ENCODE measurements at regions of chr3 and their contacts with region 1.

Region 1: GRCh38 chr3:100073899-100074307 is 40.4 kb downstream of the FILIP1L start:
- DNase-seq: peak in 2 of 9 donors; percentile 5 to 32
- ATAC-seq: no peak
- H3K4me3 ChIP-seq: peak overlapping the region; percentile 8
- H3K4me3 Mint-ChIP-seq: peak overlapping the region; percentile 54 to 82 (median 76)
- H3K27ac ChIP-seq: no peak overlapping the region
- H3K27ac Mint-ChIP-seq: peak overlapping the region in 4 of 9 donors; percentile 10 to 92 (median 38)
- H3K4me1 ChIP-seq: peaks cover 16 to 31% of the 10 kb centered on the region in 2 donors
- H3K4me1 Mint-ChIP-seq: peaks cover 32 to 68% (median 57%) of the 10 kb centered on the region in 7 donors
- H3K27me3 ChIP-seq: no peaks in the 10 kb centered on the region
- H3K27me3 Mint-ChIP-seq: no peaks in the 10 kb centered on the region

Region 2: GRCh38 chr3:99714146-99714545 is 359.8 kb before region 1 on chr3:
- CTCF ChIA-PET with region 1: no interaction called
- POLR2A ChIA-PET with region 1: no interaction called
- intact Hi-C with region 1: no loop called
- DNase-seq: no peak
- ATAC-seq: no peak
- H3K4me3 ChIP-seq: no peak overlapping the region
- H3K4me3 Mint-ChIP-seq: no peak overlapping the region
- H3K27ac ChIP-seq: no peak overlapping the region
- H3K27ac Mint-ChIP-seq: no peak overlapping the region
- H3K4me1 ChIP-seq: no peaks in the 10 kb centered on the region
- H3K4me1 Mint-ChIP-seq: no peaks in the 10 kb centered on the region
- H3K27me3 ChIP-seq: no peaks in the 10 kb centered on the region
- H3K27me3 Mint-ChIP-seq: peaks cover 5 to 10% (median 10%) of the 10 kb centered on the region in 5 donors

Region 3: GRCh38 chr3:99866261-99866761 is 207.6 kb before region 1 on chr3:
- CTCF ChIA-PET with region 1: no interaction called
- POLR2A ChIA-PET with region 1: no interaction called
- intact Hi-C with region 1: loop called in 1 of 2 experiments (anchors 2 kb)
- DNase-seq: peak in 1 of 9 donors; percentile 28
- ATAC-seq: peak; percentile 42
- H3K4me3 ChIP-seq: no peak overlapping the region
- H3K4me3 Mint-ChIP-seq: peak overlapping the region in 2 of 10 donors; percentile 19 to 79
- H3K27ac ChIP-seq: no peak overlapping the region
- H3K27ac Mint-ChIP-seq: peak overlapping the region in 2 of 9 donors; percentile 70 to 89
- H3K4me1 ChIP-seq: peaks cover 0 to 8% of the 10 kb centered on the region in 2 donors
- H3K4me1 Mint-ChIP-seq: peaks cover 17 to 75% (median 28%) of the 10 kb centered on the region in 7 donors
- H3K27me3 ChIP-seq: no peaks in the 10 kb centered on the region
- H3K27me3 Mint-ChIP-seq: no peaks in the 10 kb centered on the region

Region 4: DNA sequence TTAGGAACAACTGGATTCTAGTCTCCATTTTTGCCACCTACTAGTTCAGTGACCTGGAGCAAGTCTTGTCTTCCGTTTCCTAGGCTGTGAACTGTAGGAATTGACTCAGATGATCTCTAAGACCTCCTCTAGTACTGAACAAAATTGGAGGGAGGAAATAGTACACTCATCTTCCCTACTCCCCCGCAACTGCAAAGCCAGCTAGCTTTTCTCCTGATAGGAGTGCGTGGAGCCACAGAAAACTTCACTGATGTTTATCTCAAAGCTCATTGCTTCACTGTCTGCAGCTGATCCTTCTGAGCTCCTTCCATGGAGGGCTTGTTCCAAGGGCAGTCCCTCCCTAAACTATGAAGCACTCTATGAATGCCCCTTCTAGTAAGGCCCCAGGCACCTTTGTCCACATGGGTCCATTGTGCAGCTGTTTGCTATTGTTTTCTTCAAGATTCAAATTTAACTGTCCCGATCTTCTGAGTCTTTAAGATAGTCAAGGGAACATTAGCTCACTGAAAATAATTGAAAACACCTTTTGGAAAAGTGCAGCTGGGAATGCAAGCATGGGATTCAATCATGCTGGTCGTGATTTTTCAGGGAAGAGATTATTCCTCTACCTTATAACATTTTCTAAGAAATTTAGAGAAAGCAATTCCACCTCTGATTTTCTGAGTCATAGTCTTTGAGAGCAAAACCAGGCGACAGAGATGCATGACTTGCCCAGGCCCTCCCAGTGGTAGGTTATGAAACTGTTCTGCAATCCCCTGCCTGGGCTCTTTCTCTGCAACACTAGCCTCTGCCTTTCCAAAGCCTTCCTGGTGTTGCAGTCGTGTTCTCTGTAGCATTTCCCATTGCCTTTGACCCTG is 16.1 kb after region 1 on chr3:
- CTCF ChIA-PET with region 1: interaction called, 3 read pairs
- POLR2A ChIA-PET with region 1: no interaction called
- intact Hi-C with region 1: loop called in 1 of 2 experiments (anchors 1 kb)
- DNase-seq: no peak
- ATAC-seq: peak; percentile 63
- H3K4me3 ChIP-seq: no peak overlapping the region
- H3K4me3 Mint-ChIP-seq: peak overlapping the region in 1 of 10 donors; percentile 36
- H3K27ac ChIP-seq: no peak overlapping the region
- H3K27ac Mint-ChIP-seq: peak overlapping the region in 1 of 9 donors; percentile 34
- H3K4me1 ChIP-seq: no peaks in the 10 kb centered on the region
- H3K4me1 Mint-ChIP-seq: peaks cover 0 to 36% (median 0%) of the 10 kb centered on the region in 7 donors
- H3K27me3 ChIP-seq: no peaks in the 10 kb centered on the region
- H3K27me3 Mint-ChIP-seq: peaks cover 0 to 3% (median 0%) of the 10 kb centered on the region in 5 donors

Measured in naive thymus-derived CD4-positive, alpha-beta T cell (primary cell).